HEK293 (cell line): ENCODE measurements at regions of chr15 and their contacts with region 1.

Region 1: DNA sequence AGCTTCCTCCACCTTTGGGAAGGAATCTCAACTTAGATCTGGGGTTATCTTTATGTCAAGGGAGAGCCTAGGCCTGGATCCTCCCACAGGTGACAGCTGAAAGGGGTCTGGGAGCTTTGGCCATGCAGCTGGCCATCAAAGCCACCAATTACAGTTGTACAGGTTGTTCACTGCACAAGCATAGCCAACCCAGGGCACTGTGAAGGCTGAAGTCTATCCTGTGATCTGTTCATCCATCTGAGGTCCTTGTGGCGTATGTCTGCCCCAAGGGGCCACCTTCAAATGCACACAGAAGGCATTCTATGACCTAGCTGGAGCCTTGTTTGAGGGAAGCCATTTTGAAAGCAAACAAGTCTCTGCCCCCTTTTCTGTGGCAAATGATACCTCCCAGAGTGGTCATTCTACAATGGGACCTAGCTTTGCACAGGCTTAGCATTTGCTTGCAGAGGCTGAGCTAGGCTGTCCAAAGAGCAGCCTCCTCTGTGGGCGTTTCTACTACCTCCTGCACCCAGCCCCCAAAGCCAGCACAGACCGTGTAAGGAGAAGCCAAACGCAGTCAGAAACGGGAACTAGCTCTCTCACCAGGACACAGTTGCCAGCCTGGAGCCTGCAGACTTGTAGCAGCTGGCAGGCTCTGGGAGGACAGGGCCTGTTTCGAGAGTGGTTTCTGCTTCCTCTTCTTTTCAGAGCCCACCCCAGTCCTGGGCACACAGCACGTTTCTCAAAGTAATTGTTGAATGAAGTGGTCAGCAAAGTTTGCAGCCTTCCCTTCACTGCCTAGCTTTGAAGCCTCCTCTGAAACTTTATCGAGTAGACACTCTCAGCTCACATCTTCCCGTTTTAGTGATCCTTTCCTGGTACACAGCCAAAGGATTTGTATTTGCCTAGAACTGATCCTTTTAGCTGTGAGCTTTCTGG is 157.3 kb upstream of the SMAD3 start:
- H3K4me3 ChIP-seq: no peak overlapping the region
- H3K27ac ChIP-seq: no peak overlapping the region
- H3K4me1 ChIP-seq: no peaks in the 10 kb centered on the region
- CTCF ChIP-seq: no peak

Region 2: DNA sequence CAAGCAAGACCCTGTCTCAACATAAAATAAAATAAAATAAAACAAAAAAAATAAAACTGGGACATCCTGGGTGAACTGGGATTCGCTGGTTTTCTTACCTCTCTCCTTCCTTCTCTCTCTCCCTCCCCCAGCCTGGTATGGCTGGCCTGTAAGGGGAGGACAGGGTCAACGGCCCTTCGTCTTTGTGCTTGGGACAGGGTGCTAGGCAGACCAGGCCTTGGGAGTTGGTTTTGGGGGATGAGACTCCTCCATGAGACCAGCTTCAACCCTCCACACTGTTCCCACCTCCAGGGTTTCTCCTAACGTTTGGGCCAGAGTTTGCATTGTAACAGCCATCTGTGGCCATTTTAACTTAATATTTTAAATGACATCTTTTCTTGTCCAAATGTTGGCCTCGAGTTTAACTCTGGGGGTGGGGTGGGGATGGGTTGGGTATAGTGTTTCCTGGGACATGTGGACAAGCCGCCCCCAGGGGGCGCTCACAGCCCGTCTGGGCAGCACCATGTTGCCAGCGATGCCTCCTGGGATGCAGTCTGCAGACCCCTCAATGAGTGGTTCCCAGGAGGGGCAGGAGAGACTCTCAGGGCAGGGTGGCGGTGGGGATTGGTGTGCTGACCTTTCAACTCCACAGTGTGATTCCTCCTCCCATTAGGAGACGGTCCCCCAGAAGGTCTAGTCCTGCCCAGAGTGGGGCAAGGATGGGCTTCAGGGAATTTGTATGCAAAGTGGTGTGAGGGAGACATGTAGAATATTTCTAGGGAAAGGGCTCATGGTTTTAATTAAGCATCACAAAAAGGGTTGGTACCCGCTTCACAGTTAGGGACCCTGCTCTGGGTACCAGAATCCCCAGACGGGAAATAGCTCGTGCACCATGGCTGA is 304.5 kb before region 1 on chr15:
- CTCF ChIA-PET with region 1: interaction called, 25 read pairs
- POLR2A ChIA-PET with region 1: no interaction called
- H3K4me3 ChIP-seq: no peak overlapping the region
- H3K27ac ChIP-seq: no peak overlapping the region
- H3K4me1 ChIP-seq: no peaks in the 10 kb centered on the region
- CTCF ChIP-seq: peak; percentile 75

Region 3: DNA sequence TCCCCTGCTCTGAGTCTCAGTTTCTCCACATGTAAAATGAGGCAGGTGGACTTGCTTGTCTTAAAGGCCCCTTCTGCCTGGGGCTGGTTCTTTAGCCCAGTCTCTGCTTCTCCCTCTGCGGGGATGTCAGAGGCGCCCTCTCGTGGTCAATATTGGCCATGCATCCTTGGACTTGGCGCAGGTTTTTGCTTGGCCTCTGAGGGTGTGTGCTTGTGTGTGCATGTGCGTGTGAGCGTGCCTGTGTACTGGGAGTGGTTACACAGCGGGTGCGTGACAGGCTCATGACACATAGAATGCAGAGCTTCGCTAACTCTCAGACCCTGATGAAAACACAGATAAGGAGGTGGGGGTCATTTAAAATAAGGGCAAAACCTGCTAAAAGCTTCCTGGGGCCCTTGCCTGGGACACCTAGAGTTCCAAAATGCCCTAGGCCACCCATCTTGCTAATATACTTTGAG is 45.2 kb before region 1 on chr15:
- CTCF ChIA-PET with region 1: interaction called, 83 read pairs
- POLR2A ChIA-PET with region 1: no interaction called
- H3K4me3 ChIP-seq: no peak overlapping the region
- H3K27ac ChIP-seq: no peak overlapping the region
- H3K4me1 ChIP-seq: no peaks in the 10 kb centered on the region
- CTCF ChIP-seq: peak; percentile 95

Region 4: DNA sequence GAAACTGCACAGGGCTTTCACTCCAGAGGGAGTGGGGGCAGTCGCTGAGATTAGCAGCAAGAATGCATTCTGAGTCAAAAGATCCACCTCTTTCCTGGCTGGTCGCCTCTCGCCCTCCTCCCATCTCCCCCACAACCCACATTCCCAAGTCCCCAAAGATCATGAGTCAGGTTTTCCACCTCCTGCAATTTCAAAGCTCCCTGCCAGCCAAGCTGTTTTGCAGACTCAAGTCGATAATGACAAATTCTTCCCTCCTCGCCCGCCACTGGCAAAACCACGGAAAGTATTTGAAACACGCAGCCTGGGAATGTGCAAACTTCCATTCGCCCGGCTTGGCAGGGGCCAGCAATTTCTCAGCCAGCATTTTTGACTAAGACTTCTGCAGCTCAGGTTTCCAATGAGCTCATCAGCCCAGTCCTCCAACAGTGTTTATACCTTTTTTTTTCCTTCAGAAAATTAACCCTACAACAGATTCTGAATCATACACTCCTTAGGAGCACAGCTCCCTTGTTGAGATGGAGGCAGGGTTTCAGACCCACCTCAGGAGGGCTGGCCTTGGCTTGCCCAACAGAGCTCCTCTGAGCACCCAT is 24.7 kb before region 1 on chr15:
- CTCF ChIA-PET with region 1: interaction called, 34 read pairs
- POLR2A ChIA-PET with region 1: interaction called, 5 read pairs
- H3K4me3 ChIP-seq: no peak overlapping the region
- H3K27ac ChIP-seq: peak overlapping the region; percentile 66
- H3K4me1 ChIP-seq: peaks cover 25% of the 10 kb centered on the region
- CTCF ChIP-seq: no peak

Region 5: GRCh38 chr15:66894986-66895780 is 12.9 kb before region 1 on chr15:
- CTCF ChIA-PET with region 1: interaction called, 39 read pairs
- POLR2A ChIA-PET with region 1: no interaction called
- H3K4me3 ChIP-seq: no peak overlapping the region
- H3K27ac ChIP-seq: no peak overlapping the region
- H3K4me1 ChIP-seq: peaks cover 4% of the 10 kb centered on the region; the same call in 1 of the 2 replicates
- CTCF ChIP-seq: no peak

Region 6: GRCh38 chr15:66923438-66923881 is 15.4 kb after region 1 on chr15:
- CTCF ChIA-PET with region 1: interaction called, 108 read pairs
- POLR2A ChIA-PET with region 1: interaction called, 5 read pairs
- H3K4me3 ChIP-seq: no peak overlapping the region
- H3K27ac ChIP-seq: no peak overlapping the region
- H3K4me1 ChIP-seq: no peaks in the 10 kb centered on the region
- CTCF ChIP-seq: peak; percentile 62

Region 7: DNA sequence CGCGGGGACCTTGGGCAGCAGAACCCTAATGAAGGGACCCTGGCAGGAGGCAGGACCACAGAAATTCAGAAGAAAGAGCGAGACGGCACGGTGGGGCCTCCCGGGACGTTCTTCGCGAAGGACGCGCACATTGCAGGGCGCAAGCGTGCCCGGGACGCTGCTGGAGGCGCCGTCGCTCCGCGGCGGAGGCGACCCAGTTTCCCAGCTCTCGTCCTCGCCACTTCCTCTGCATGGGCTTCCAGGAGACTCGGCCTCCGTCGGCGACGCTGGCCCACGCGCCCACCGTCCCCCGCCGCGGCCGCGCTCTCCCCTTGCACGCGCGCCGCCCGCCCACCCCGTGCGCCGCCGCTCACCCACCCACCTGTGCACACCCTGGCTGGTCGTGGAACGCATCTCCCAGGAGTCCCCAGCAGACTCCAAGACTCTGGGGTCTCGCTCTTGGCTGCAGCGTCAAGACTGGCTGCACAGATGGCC is 125.5 kb after region 1 on chr15:
- CTCF ChIA-PET with region 1: no interaction called
- POLR2A ChIA-PET with region 1: no interaction called
- H3K4me3 ChIP-seq: no peak overlapping the region
- H3K27ac ChIP-seq: no peak overlapping the region
- H3K4me1 ChIP-seq: peaks cover 9% of the 10 kb centered on the region
- CTCF ChIP-seq: no peak